PC-9 (cell line): ENCODE measurements at regions of chr2 and their contacts with region 1.

Region 1: DNA sequence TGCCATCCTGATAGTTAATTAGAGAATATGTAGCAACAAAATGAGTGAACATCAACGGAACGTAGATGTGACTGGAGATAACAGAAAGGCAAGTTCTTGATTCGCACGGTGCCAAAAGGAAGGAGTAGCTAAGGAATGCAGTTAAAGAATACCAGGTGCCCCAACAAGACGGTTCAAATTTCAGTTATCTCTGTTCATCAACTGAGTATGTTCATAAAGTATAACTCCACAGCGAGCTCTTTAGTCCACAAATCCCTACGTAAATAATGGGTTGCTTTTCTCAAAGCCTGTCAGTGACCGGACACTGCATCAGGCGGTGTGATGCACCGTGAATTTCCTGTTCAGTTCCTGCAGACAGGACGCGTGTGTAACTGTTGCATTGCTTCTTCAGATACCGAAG is 91.8 kb downstream of the NOL10 start:
- DNase-seq: peak; percentile 41 to 98
- H3K4me3 ChIP-seq: peak overlapping the region; percentile 27; the same call in 1 of the 2 replicates
- H3K27ac ChIP-seq: peak overlapping the region; percentile 58
- H3K4me1 ChIP-seq: peaks cover 26% of the 10 kb centered on the region
- H3K27me3 ChIP-seq: no peaks in the 10 kb centered on the region
- CTCF ChIP-seq: no peak

Region 2: GRCh38 chr2:10355471-10356458 is 242.2 kb before region 1 on chr2:
- CTCF ChIA-PET with region 1: no interaction called
- POLR2A ChIA-PET with region 1: no interaction called
- intact Hi-C with region 1: no loop called
- DNase-seq: peak in 1 of 2 experiments; percentile 74
- H3K4me3 ChIP-seq: no peak overlapping the region
- H3K27ac ChIP-seq: peak overlapping the region; percentile 40
- H3K4me1 ChIP-seq: peaks cover 15% of the 10 kb centered on the region
- H3K27me3 ChIP-seq: no peaks in the 10 kb centered on the region
- CTCF ChIP-seq: no peak

Region 3: GRCh38 chr2:10448208-10448645 is 149.7 kb before region 1 on chr2 and contains the start of gene ODC1:
- CTCF ChIA-PET with region 1: no interaction called
- POLR2A ChIA-PET with region 1: no interaction called
- intact Hi-C with region 1: loop called (anchors 5 kb)
- DNase-seq: peak; percentile 75 to 93
- H3K4me3 ChIP-seq: peak within 1 kb of the TSS; percentile 75
- H3K27ac ChIP-seq: peak within 1 kb of the TSS; percentile 7
- H3K4me1 ChIP-seq: peaks cover 55% of the 10 kb centered on the region
- H3K27me3 ChIP-seq: no peaks in the 10 kb centered on the region
- CTCF ChIP-seq: no peak
- total RNA-seq, gene ODC1: 39.9 and 40.5 TPM in 2 replicates

Region 4: DNA sequence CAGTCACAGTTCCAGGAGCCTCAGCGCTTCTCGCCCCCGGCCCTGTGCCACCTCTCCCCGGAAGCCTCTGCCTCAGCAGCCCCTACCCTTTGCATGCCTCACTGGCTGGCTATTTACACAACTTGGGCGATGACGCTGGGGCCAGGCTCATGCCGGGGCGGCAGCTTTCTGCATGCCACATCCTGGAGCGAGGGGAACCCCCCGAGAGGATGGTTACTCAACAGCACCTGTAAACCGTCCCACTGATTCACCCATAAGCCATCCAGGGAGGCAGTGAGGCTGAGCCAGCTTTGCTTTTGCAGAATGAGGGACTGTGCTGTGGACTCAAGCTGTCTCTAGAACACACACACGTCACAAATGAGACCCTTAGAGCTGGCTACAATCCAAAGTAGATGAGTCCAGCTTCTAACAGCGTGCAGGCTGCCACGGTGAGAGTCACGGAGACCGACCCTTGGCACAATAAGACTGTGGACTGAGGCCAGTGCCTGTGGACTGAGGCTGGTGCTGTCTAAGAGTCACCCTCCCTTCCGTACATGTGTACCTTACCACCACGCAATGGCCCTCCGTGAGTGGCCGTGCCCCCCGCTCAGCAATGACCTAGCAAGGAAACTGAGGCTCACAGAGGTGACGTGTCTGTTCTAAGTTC is 104.2 kb before region 1 on chr2:
- CTCF ChIA-PET with region 1: no interaction called
- POLR2A ChIA-PET with region 1: no interaction called
- intact Hi-C with region 1: loop called (anchors 2 kb)
- DNase-seq: peak; percentile 91 to 97
- H3K4me3 ChIP-seq: no peak overlapping the region
- H3K27ac ChIP-seq: peak overlapping the region; percentile 61
- H3K4me1 ChIP-seq: peaks cover 41% of the 10 kb centered on the region
- H3K27me3 ChIP-seq: no peaks in the 10 kb centered on the region
- CTCF ChIP-seq: no peak

Region 5: DNA sequence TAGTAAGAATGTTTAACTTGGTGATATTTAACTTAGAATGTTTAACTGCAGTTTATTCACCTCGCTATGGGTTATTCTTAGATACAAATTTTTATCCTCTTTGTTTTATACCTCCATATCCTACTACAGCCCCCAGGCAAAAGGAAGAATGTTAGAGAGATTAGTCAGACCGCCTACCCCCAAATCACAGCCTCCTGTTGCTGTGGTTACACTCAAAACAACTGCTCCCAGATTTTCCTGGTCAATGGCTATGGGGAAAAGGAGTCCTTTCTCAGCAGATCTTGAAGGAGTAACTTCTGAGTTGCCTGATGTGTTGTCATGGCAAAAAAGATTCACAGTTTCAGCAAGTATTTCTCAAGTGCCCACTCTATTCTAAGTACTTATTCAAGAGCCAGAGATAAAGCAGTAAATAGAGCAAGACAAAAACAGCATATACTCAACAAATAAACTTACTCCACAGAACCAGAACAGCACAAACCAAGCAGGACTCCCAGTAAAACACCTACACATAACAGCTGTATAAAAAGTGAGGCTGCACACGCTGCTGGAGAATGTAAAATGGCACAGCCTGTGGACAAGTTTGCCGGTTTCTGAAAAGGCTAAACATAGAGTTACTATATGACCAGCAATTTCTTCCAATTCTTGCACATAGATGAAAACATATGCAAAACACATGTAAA is 13.0 kb before region 1 on chr2:
- CTCF ChIA-PET with region 1: no interaction called
- POLR2A ChIA-PET with region 1: no interaction called
- intact Hi-C with region 1: loop called (anchors 1 kb)
- DNase-seq: peak; percentile 73 to 98
- H3K4me3 ChIP-seq: peak overlapping the region; percentile 13; the same call in 1 of the 2 replicates
- H3K27ac ChIP-seq: peak overlapping the region; percentile 72
- H3K4me1 ChIP-seq: peaks cover 28% of the 10 kb centered on the region
- H3K27me3 ChIP-seq: no peaks in the 10 kb centered on the region
- CTCF ChIP-seq: no peak

Region 6: DNA sequence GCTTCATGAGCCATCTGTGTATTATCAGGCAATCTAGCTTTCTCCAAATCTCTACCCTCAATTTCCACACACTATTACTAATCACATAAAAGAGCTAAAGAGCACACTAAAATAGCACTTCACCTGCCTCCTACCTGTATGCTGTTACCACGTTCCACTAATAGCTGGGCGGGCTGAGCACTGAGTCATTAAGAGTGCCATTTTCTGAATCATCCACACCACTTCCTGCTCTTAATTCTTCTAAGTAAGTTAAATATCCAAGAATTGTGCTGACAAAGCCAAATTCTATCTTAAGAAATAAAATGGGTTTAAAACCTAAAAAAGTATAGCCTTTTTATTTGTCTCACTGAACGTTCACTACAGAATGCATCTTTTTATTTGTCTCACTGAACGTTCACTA is 56.1 kb after region 1 on chr2:
- CTCF ChIA-PET with region 1: no interaction called
- POLR2A ChIA-PET with region 1: no interaction called
- intact Hi-C with region 1: loop called (anchors 2 kb)
- DNase-seq: peak; percentile 66 to 99
- H3K4me3 ChIP-seq: no peak overlapping the region
- H3K27ac ChIP-seq: peak overlapping the region; percentile 68
- H3K4me1 ChIP-seq: peaks cover 40% of the 10 kb centered on the region
- H3K27me3 ChIP-seq: no peaks in the 10 kb centered on the region
- CTCF ChIP-seq: no peak